Tibial artery (tissue), 4 donors: ENCODE measurements at regions of chr19 and their contacts with region 1.

Region 1: GRCh38 chr19:41883821-41884733 is 1.1 kb downstream of the ARHGEF1 start:
- DNase-seq: peak; percentile 94 to 97
- H3K4me3 ChIP-seq: peak overlapping the region; percentile 86 to 93
- H3K27ac ChIP-seq: peak overlapping the region; percentile 76 to 83
- H3K4me1 ChIP-seq: peaks cover 0 to 44% (median 12%) of the 10 kb centered on the region in 4 donors
- H3K27me3 ChIP-seq: no peaks in the 10 kb centered on the region
- CTCF ChIP-seq: no peak

Region 2: DNA sequence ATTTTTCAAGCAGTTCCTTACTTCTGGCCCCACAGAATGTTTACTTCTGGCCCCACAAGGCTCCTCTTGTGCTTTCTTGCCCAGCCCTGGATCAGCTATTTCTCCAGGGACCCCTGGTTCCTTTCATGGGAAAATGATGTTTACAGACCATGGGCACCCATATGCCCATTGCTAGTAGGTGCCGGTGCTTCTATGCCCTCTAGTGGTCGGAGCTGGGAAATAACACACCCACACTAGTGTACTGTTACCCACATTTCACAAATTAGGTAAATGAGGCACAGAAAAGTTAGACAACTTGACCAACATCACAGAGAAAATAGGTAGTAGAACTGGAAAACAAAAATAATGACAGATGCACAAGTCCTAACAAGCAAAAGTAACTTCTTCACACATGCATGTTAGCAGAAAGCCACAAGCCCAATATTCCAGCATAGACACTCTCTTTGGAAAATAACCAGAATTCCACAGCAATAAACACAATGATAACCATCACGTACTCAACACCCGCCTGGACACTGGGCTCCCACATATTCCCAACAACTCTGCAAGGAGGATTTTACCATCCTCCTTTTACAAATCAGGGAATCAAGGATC is 130.0 kb before region 1 on chr19:
- intact Hi-C with region 1: no loop called
- DNase-seq: peak in 1 of 2 donors; percentile 48
- H3K4me3 ChIP-seq: no peak overlapping the region
- H3K27ac ChIP-seq: no peak overlapping the region
- H3K4me1 ChIP-seq: no peaks in the 10 kb centered on the region
- H3K27me3 ChIP-seq: peaks cover 0 to 17% of the 10 kb centered on the region in 2 donors
- CTCF ChIP-seq: peak; percentile 33 to 42

Region 3: GRCh38 chr19:41767115-41767514 is 117.0 kb before region 1 on chr19:
- intact Hi-C with region 1: no loop called
- DNase-seq: no peak
- H3K4me3 ChIP-seq: no peak overlapping the region
- H3K27ac ChIP-seq: no peak overlapping the region
- H3K4me1 ChIP-seq: no peaks in the 10 kb centered on the region
- H3K27me3 ChIP-seq: peaks cover 0 to 10% of the 10 kb centered on the region in 2 donors
- CTCF ChIP-seq: no peak

Region 4: DNA sequence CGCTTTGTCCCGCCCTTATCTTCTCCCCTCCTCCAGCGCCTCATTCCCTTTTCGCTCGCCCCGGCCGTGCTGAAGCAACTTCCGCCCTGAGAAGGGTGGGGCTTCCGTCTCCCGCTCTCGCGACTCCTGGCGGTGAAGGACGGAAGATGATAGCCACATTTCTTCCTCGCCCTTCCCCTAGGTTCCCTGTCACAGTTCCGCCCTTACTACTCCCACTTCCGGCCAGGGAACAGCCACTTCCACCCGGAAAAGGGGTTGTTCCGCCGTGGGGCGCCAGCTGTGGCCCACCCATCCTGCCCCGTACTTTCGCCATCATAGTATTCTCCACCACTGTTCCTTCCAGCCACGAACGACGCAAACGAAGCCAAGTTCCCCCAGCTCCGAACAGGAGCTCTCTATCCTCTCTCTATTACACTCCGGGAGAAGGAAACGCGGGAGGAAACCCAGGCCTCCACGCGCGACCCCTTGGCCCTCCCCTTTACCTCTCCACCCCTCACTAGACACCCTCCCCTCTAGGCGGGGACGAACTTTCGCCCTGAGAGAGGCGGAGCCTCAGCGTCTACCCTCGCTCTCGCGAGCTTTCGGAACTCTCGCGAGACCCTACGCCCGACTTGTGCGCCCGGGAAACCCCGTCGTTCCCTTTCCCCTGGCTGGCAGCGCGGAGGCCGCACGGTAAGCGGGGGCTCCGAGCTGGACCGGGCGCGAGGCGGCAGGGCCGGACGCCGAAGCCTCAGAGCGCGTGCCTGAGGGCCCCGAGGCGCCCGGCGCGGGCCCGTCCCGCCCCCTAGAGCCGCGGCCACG is 24.3 kb before region 1 on chr19 and contains the start of gene RPS19:
- intact Hi-C with region 1: loop called (anchors 2 kb)
- DNase-seq: peak; percentile 97 to 99
- H3K4me3 ChIP-seq: peak within 1 kb of the TSS; percentile 73 to 88
- H3K27ac ChIP-seq: peak within 1 kb of the TSS; percentile 89 to 92
- H3K4me1 ChIP-seq: peaks cover 0 to 38% (median 26%) of the 10 kb centered on the region in 4 donors
- H3K27me3 ChIP-seq: peaks cover 0 to 3% of the 10 kb centered on the region in 2 donors
- CTCF ChIP-seq: peak; percentile 64 to 90

Region 5: GRCh38 chr19:41959056-41960053 is 75.3 kb after region 1 on chr19 and contains the start of gene RABAC1:
- intact Hi-C with region 1: loop called (anchors 5 kb)
- DNase-seq: peak; percentile 91 to 93
- H3K4me3 ChIP-seq: peak within 1 kb of the TSS; percentile 68 to 91
- H3K27ac ChIP-seq: peak within 1 kb of the TSS; percentile 85 to 96
- H3K4me1 ChIP-seq: peaks cover 0 to 19% (median 13%) of the 10 kb centered on the region in 4 donors
- H3K27me3 ChIP-seq: peaks cover 0 to 4% of the 10 kb centered on the region in 2 donors
- CTCF ChIP-seq: no peak